K562 (cell line): ENCODE measurements at regions of chr6 and their contacts with region 1.

Region 1: DNA sequence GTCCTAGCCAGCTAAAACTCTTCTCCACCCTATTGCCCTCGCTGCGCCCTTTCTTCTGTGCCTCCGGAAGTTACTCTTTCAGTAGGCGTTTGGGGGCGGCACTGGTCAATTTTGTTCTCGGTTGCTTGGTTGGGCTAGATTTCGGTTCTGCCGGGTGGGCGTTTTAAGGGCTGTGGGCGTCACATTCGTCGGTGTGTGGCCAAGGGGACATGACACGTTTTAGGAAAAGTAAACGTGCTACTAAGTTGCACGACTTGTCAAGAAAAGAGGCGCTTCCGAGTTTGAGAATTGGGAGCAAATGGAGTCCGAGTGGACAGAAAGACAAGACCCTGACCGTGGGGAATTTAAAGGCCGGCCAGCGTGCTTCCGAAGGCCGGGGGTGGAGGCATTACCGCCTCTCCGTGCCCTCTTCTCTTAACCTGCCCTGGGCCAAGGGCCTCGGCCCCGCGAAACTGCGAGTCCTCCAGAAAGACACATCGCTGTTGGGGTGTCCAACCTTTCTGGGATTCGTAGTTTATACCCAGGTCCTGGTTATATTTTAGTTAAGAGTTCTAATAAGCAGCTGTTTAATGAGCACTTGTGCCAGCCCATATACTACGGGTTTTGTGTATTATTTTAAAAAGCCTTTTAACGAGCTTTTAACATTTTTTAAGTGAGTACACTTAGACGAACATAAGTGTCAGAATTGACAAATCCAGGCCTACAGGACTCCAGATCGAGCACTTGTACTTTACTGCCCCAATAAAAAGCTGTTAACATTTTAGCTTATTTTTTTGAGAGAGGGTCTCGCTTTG is 661 bp upstream of the BAG6 start:
- DNase-seq: peak; percentile 94 to 99 (median 96)
- ATAC-seq: peak; percentile 83
- H3K4me3 ChIP-seq: peak overlapping the region; percentile 73
- H3K27ac ChIP-seq: peak overlapping the region; percentile 98
- H3K4me1 ChIP-seq: peaks cover 22 to 26% of the 10 kb centered on the region in 2 experiments
- H3K27me3 ChIP-seq: no peaks in the 10 kb centered on the region
- CTCF ChIP-seq: peak; percentile 43 to 72 (median 54)
- EP300 ChIP-seq: no peak; the same call in 1 of the 2 replicates
- POLR2A ChIP-seq: peak; percentile 98
- RAD21 ChIP-seq: peak in 1 of 2 experiments; percentile 52; a peak in 2 of 4 replicates

Region 2: DNA sequence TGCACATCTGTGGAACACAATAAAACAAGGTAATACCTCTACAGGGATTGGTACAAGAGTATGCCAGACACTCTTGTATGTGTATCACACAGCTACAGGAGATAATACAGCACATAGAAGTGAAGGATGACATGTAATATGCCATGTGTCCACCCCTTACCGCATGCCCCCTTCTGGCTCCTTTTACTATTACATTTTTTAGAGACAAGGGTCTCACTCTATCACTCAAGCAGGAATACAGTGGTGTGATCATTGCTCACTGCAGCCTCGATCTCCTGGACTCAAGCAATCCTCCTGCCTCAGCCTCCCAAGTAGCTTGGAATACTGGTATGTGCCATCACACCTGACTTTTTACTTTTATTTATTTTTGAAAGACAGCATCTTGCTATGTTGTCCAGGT is 56.1 kb before region 1 on chr6:
- CTCF ChIA-PET with region 1: no interaction called
- POLR2A ChIA-PET with region 1: interaction called, 10 read pairs
- in situ Hi-C with region 1: no loop called
- intact Hi-C with region 1: no loop called
- DNase-seq: peak; percentile 72 to 76 (median 74)
- ATAC-seq: peak; percentile 86
- H3K4me3 ChIP-seq: no peak overlapping the region
- H3K27ac ChIP-seq: no peak overlapping the region
- H3K4me1 ChIP-seq: peaks cover 7 to 16% of the 10 kb centered on the region in 2 experiments; a peak in 3 of 5 replicates
- H3K27me3 ChIP-seq: no peaks in the 10 kb centered on the region
- CTCF ChIP-seq: peak; percentile 68 to 81 (median 71)
- EP300 ChIP-seq: no peak
- POLR2A ChIP-seq: no peak
- RAD21 ChIP-seq: peak; percentile 69 to 85

Region 3: DNA sequence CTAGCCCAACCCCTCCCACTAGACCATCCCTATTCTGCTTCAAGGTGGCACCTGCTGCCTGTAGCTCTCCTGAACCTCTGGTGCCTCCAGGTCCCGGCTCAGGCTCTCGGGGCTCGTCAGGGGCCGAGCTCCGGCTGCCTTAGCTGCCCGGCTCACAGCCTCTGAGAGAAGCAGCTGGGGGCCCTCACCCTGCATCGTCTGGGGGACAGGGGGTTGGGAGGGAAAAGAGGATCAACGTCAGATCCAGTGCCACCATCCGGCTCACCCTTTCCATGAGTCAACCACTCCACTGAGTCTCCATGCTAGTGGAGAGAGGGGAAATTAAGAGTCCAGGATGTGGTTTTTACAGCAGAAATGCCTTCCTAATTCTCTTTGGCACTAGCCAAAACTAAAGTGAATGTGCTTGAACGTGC is 13.7 kb before region 1 on chr6:
- CTCF ChIA-PET with region 1: no interaction called
- POLR2A ChIA-PET with region 1: interaction called, 190 read pairs
- in situ Hi-C with region 1: no loop called
- intact Hi-C with region 1: no loop called
- DNase-seq: no peak
- ATAC-seq: no peak
- H3K4me3 ChIP-seq: no peak overlapping the region
- H3K27ac ChIP-seq: no peak overlapping the region
- H3K4me1 ChIP-seq: peaks cover 3 to 13% of the 10 kb centered on the region in 2 experiments; a peak in 4 of 5 replicates
- H3K27me3 ChIP-seq: no peaks in the 10 kb centered on the region
- CTCF ChIP-seq: no peak
- EP300 ChIP-seq: no peak
- POLR2A ChIP-seq: no peak
- RAD21 ChIP-seq: no peak

Region 4: DNA sequence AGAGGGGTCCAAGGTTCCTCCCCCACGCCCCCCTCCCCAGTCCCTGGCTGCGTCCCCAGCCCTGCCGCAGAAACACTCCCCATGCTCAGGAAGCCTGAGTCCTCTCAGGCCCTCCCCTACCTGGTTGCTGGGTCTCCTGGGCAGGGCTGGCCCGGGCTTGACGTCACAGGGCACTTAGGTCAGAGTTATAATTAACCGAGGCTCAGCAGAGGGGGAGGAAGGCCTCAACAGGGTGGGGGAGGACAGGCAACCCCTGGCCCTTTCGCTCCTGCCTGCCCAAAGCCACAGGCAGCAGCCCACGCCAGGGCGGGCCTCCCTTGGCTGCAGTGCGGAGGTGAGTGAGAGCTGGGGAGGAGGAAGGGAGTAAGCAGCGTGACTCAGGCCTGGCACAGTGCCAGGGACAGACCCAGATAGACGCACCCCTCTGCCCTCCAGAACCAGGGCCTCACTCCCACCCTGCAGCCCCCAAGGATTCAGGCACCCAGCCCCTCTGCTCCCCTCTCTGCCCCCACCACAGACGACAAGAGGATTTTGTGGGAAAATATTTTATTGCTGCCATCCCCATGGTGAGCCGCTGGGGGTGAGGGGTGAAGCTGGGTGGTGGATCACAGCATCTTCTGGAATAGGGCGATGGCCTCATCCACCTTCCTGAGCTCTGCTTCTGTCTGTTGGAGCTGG is 124.0 kb after region 1 on chr6 and contains the start of gene VWA7:
- CTCF ChIA-PET with region 1: no interaction called
- POLR2A ChIA-PET with region 1: interaction called, 10 read pairs
- in situ Hi-C with region 1: no loop called
- intact Hi-C with region 1: no loop called
- DNase-seq: peak; percentile 98 to 99 (median 99)
- ATAC-seq: peak; percentile 91
- H3K4me3 ChIP-seq: peak within 1 kb of the TSS; percentile 10; the same call in 1 of the 2 replicates
- H3K27ac ChIP-seq: peak within 1 kb of the TSS; percentile 87
- H3K4me1 ChIP-seq: peaks cover 43 to 85% of the 10 kb centered on the region in 2 experiments
- H3K27me3 ChIP-seq: no peaks in the 10 kb centered on the region
- CTCF ChIP-seq: peak; percentile 14 to 44 (median 24); a peak in 2 of 6 replicates
- EP300 ChIP-seq: peak; percentile 88
- POLR2A ChIP-seq: peak; percentile 84; the same call in 1 of the 2 replicates
- RAD21 ChIP-seq: peak; percentile 46 to 80
- polyA plus RNA-seq, gene VWA7: 0.18 to 0.32 TPM

Region 5: DNA sequence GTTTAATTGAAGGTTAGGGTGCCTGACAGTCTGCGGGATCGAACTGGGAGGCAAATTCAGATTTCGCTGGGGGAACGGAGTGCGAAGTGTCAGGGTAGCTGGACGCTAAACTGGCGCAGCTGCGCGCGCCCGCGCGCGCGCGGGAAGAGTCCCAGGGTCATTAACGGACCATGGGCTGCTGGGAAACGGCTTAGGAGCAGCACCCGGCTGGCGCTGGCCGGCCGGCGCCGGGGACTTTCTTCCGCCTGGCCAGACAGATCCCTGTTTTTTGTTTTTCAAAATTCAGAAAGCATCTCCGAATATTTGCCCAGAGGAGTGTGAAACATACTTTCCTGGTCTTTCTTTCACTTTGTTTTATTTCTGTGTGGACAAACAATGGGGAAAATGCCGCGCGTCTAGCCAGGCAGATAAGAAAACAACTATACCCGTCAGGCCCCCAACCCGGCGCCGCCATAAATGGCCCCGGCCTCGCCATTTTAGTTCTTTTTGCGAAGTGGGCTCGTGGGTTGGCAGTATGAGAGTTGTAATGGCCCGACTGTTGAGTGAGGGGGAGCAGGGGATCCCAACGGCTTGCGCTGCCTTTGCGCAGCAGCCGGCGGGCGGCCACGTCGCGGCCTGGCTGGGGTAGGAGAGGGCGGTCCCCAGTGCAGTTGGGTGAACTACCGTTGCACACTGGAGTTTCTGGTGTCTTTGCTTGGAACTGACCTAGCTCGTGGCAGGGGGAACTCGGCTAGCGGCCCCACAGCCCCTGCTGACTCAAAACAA is 181.5 kb after region 1 on chr6:
- CTCF ChIA-PET with region 1: no interaction called
- POLR2A ChIA-PET with region 1: interaction called, 66 read pairs
- in situ Hi-C with region 1: no loop called
- intact Hi-C with region 1: loop called (anchors 1 kb)
- DNase-seq: peak; percentile 88 to 99 (median 94)
- ATAC-seq: peak; percentile 79
- H3K4me3 ChIP-seq: peak overlapping the region; percentile 85
- H3K27ac ChIP-seq: peak overlapping the region; percentile 88
- H3K4me1 ChIP-seq: peaks cover 41 to 55% of the 10 kb centered on the region in 2 experiments
- H3K27me3 ChIP-seq: no peaks in the 10 kb centered on the region
- CTCF ChIP-seq: peak in 1 of 3 experiments; percentile 20; a peak in 1 of 6 replicates
- EP300 ChIP-seq: peak; percentile 83
- POLR2A ChIP-seq: peak; percentile 100
- RAD21 ChIP-seq: peak; percentile 1 to 33; a peak in 2 of 4 replicates